ENCODE measurements at regions of chr2 and their contacts with region 1.

Region 1: DNA sequence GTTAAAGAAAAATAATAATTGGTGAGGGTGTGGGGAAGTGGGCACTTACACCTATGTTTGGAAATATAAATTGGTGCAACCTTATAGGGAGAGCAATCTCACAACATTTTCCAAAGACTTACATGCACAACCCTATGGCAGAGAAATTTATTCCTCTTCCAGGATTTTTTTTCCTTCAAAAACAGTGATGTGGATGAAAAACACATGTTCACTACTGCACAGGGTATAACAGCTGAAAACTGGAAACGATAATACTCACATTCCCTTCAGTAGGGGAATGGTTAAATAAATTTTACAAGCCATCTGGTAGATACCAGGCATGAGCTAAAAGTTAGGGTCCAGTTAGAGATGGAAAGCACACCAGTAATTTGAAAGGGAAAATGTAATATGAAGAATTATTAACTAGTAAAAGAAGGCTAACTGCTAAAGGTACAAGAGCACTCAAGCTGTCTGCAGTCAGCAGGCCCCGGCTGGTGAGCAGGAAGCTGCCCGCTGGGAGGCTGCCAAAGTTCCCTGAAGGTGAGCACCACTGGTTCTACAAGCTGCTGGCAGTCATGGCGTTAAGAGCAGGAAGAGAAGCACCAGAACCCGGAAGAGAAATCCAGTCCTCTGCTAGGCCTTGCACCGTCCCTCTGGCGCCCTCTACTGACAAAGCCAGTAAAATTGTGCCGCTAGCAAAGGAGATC is 28.4 kb upstream of the CASP8 start:
- H3K4me3 Mint-ChIP-seq: peak overlapping the region; percentile 20
- H3K27ac Mint-ChIP-seq: peak overlapping the region; percentile 77
- H3K4me1 Mint-ChIP-seq: peaks cover 39% of the 10 kb centered on the region
- H3K27me3 Mint-ChIP-seq: no peaks in the 10 kb centered on the region

Region 2: DNA sequence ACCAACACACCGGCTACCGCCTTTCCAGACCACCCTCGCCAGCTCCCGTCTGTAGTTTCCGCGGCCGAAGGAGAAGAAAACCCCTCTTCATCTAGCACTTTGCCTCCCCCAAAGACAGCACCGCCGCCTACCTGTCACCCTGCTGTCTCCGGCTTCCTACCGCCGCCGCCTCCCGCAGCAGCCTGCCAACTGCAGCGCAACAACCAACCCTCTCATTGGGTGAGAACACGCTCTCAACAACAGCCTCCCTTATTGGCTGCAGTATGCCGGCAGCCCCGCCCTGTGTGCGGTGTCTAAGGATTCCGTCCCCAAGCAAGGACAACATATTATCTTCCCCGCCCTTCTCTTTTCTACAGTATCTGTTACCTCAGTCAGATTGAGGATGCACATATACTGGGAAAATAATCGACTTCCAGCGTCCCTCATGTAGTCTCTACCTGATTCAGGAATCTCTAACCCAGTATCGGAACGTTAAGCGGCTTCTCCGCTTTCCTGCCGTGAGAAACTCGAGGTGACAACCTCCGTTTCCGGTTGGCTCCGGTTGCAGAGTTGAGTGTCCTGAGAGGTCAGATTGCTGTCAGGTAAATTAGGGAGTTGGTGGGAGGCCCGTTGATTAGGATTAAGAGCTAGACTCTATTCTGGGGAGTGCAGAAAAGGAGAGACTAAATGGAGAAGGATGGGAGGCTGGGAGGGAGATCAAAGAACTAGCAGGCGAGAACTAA is 160.3 kb before region 1 on chr2 and contains the starts of genes HYCC2 and NDUFB3:
- intact Hi-C with region 1: loop called (anchors 5 kb)
- H3K4me3 Mint-ChIP-seq: peak within 1 kb of the TSS; percentile 94
- H3K27ac Mint-ChIP-seq: peak within 1 kb of the TSS; percentile 93
- H3K4me1 Mint-ChIP-seq: peaks cover 37% of the 10 kb centered on the region
- H3K27me3 Mint-ChIP-seq: no peaks in the 10 kb centered on the region

Region 3: DNA sequence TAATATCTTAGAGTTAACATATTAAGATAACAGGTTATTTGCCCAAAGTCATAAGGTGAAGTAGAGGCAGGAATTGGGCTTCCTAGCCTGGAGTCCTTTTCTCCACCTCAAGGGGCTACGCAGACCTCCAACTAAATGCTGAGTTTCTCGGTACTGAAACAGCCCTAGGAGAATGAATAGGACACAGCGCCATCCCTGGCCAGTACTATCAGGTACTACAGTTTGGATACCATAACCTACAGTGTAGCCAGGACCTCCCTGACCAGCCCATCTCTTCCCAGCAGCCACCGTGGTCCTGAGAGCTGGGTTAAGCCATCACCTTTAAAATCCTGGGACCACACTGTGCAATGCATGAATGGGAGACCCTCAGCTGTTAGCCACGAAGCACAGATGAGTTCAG is 44.1 kb after region 1 on chr2:
- intact Hi-C with region 1: loop called (anchors 5 kb)
- H3K4me3 Mint-ChIP-seq: no peak overlapping the region
- H3K27ac Mint-ChIP-seq: no peak overlapping the region
- H3K4me1 Mint-ChIP-seq: peaks cover 40% of the 10 kb centered on the region
- H3K27me3 Mint-ChIP-seq: no peaks in the 10 kb centered on the region

Region 4: GRCh38 chr2:201451292-201452057 is 219.6 kb after region 1 on chr2 and contains the starts of genes STRADB and TRAK2:
- intact Hi-C with region 1: loop called (anchors 1 kb)
- H3K4me3 Mint-ChIP-seq: peak within 1 kb of the TSS; percentile 97
- H3K27ac Mint-ChIP-seq: peak within 1 kb of the TSS; percentile 98
- H3K4me1 Mint-ChIP-seq: peaks cover 36% of the 10 kb centered on the region
- H3K27me3 Mint-ChIP-seq: no peaks in the 10 kb centered on the region